Panc1 (cell line): ENCODE measurements at regions of chr5 and their contacts with region 1.

Region 1: DNA sequence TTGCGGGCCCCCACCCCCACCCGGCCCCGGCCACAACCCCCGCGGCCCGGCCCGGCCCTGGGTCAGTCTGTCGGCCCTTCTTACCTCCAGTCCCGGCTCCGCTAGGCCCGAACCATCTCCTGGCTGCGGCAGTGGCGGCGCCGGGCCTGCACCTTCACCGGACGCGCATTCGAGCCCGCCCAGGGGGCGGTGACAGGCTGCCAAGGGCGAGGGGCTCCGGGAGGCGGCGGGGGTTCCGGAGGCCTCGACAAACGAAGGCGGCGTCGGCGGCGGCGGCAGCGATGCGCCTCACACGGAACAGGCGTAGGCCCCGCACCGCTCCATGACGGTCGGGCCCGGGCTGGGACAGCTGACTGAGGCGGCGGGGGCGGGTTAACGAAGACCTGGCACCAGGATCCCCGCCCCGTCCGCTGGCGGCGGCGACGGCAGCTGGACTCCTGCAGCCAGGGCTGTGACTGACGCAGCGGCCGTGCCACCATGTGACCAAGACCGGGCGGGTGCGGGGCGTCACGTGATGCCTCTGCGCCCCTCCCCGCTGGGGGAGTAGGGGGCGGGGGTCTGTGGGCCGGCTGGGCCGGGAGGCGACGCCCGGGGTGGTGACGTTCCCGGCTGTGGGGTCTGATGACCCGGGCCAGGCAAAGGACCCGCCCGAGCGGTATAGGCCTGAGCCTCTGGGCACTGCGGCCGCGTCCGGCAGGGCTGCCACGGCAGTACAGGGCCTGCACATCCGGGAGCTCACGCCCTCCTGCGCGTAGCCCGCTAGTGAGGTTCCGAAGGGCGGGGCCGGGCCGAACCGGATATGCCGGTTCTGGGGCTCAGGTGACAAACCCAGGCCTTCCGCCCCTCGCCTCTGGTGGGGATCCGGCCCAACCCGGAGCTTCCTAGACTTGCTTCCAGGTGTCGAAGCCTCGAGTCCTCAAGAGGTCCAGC is at the start of gene AFF4:
- DNase-seq: peak; percentile 67
- ATAC-seq: peak; percentile 98
- H3K4me3 ChIP-seq: peak within 1 kb of the TSS; percentile 79 to 86
- H3K27ac ChIP-seq: peak within 1 kb of the TSS; percentile 97
- H3K4me1 ChIP-seq: peaks cover 12% of the 10 kb centered on the region
- H3K27me3 ChIP-seq: no peaks in the 10 kb centered on the region
- CTCF ChIP-seq: no peak
- total RNA-seq, gene AFF4: 78.3 TPM

Region 2: DNA sequence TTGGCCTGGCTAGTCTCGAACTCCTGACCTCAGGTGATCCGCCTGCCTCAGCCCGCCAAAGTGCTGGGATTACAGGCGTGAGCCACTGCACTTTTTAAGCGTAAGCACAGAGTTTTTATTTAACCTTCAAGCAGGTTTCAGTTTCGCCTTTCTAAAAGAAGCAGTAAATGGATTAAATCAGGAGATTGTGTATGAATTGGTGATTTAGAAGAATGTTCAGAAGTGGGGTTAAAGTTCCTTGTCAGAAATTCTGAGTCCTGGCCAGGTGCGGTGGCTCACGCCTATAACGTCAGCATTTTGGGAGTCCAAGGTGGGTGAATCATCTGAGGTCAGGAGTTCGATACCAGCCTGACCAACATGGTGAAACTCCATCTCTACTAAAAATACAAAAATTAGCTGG is 100.5 kb after region 1 on chr5:
- CTCF ChIA-PET with region 1: no interaction called
- POLR2A ChIA-PET with region 1: interaction called, 10 read pairs
- in situ Hi-C with region 1: no loop called
- intact Hi-C with region 1: no loop called
- DNase-seq: no peak
- ATAC-seq: no peak
- H3K4me3 ChIP-seq: no peak overlapping the region
- H3K27ac ChIP-seq: no peak overlapping the region
- H3K4me1 ChIP-seq: 0 out of 2 replicates have a peak, but pooled peaks cover 9% of the 10 kb centered on the region
- H3K27me3 ChIP-seq: no peaks in the 10 kb centered on the region
- CTCF ChIP-seq: no peak